Ascending aorta (tissue), 2 donors: ENCODE measurements at regions of chr2 and their contacts with region 1.

Region 1: GRCh38 chr2:111897924-111898702 is at the start of gene MERTK:
- DNase-seq: peak; percentile 63 to 93
- H3K4me3 ChIP-seq: peak within 1 kb of the TSS; percentile 90 to 91
- H3K27ac ChIP-seq: peak within 1 kb of the TSS; percentile 90 to 92
- H3K4me1 ChIP-seq: peaks cover 0 to 14% of the 10 kb centered on the region in 2 donors
- H3K27me3 ChIP-seq: no peaks in the 10 kb centered on the region
- CTCF ChIP-seq: peak; percentile 69 to 90 (median 75)
- total RNA-seq, gene MERTK: 11.1 TPM

Region 2: DNA sequence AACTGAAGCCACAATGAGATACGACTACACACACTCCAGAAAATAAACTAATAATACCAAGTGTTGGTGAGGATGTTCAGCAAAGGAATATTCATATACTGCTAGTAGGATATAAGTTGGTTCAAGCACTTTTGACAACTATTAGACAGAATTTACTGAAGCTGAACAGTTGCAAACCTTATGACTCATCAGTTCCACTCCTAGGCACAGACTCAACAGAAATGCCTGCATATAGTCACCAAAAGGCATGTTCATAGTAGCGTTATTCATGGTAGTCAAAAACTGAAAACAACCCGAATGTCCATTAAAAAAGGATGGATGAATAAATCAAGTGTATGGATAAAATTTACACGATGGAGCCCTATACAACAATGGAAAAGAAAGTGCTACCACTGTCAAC is 246.1 kb before region 1 on chr2:
- intact Hi-C with region 1: no loop called
- DNase-seq: no peak
- H3K4me3 ChIP-seq: no peak overlapping the region
- H3K27ac ChIP-seq: no peak overlapping the region
- H3K4me1 ChIP-seq: no peaks in the 10 kb centered on the region
- H3K27me3 ChIP-seq: no peaks in the 10 kb centered on the region
- CTCF ChIP-seq: no peak

Region 3: GRCh38 chr2:111946294-111947114 is 48.4 kb after region 1 on chr2:
- intact Hi-C with region 1: loop called (anchors 2 kb)
- DNase-seq: peak in 1 of 2 donors; percentile 86
- H3K4me3 ChIP-seq: peak overlapping the region in 1 of 2 donors; percentile 31
- H3K27ac ChIP-seq: peak overlapping the region; percentile 90 to 97
- H3K4me1 ChIP-seq: peaks cover 16 to 21% of the 10 kb centered on the region in 2 donors
- H3K27me3 ChIP-seq: no peaks in the 10 kb centered on the region
- CTCF ChIP-seq: no peak

Region 4: GRCh38 chr2:111972955-111973565 is 74.9 kb after region 1 on chr2:
- intact Hi-C with region 1: loop called (anchors 1 kb)
- DNase-seq: peak; percentile 23 to 80
- H3K4me3 ChIP-seq: peak overlapping the region in 1 of 2 donors; percentile 47
- H3K27ac ChIP-seq: peak overlapping the region; percentile 86 to 94
- H3K4me1 ChIP-seq: peaks cover 10 to 28% of the 10 kb centered on the region in 2 donors
- H3K27me3 ChIP-seq: no peaks in the 10 kb centered on the region
- CTCF ChIP-seq: no peak

Region 5: GRCh38 chr2:112032689-112033465 is 134.8 kb after region 1 on chr2:
- intact Hi-C with region 1: loop called (anchors 5 kb)
- DNase-seq: peak in 1 of 2 donors; percentile 72
- H3K4me3 ChIP-seq: no peak overlapping the region
- H3K27ac ChIP-seq: peak overlapping the region; percentile 43 to 62
- H3K4me1 ChIP-seq: peaks cover 2 to 18% of the 10 kb centered on the region in 2 donors
- H3K27me3 ChIP-seq: no peaks in the 10 kb centered on the region
- CTCF ChIP-seq: peak in 1 of 3 experiments; percentile 18

Region 6: GRCh38 chr2:112048887-112049286 is 150.8 kb after region 1 on chr2:
- intact Hi-C with region 1: loop called (anchors 1 kb)
- DNase-seq: no peak
- H3K4me3 ChIP-seq: no peak overlapping the region
- H3K27ac ChIP-seq: no peak overlapping the region
- H3K4me1 ChIP-seq: peaks cover 0 to 19% of the 10 kb centered on the region in 2 donors
- H3K27me3 ChIP-seq: no peaks in the 10 kb centered on the region
- CTCF ChIP-seq: peak; percentile 68 to 82 (median 75)

Region 7: DNA sequence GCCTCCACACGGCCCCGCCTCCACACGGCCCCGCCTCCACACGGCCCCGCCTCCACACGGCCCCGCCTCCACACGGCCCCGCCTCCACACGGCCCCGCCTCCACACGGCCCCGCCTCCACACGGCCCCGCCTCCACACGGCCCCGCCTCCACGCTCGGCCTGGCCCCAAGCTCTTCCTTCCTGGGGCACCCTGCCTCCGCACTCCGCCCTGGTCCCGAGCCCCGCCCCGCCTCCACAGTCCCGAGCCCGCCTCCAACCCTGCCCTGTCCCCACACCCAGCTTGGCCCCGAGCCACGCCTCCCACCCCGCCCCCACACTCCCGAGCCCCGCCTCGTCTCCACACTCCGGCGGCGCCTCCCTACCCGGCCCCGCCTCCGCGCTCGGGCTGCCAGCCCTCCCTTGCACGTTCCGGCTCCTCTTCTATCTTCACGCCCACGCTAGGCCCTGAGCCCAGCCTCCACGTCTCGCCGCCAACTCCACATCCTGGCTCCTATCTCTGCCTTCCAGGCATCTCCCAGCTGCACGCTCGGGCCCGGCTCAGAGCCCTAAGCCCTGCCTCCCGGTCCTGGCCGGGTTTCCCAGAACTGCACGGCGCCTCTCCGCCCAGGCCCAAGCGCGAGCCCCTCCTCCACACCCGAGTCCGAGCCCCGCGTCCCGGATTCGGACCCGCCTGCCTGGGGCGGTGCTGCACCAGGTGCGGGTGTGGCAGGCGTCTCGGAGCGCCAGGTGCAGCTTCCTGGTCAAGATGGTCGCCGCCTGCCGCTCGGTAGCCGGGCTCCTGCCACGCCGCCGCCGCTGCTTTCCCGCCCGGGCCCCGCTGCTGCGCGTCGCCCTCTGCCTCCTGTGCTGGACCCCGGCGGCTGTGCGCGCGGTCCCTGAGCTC is 157.0 kb after region 1 on chr2 and contains the start of gene TMEM87B:
- intact Hi-C with region 1: loop called (anchors 1 kb)
- DNase-seq: peak; percentile 88 to 98
- H3K4me3 ChIP-seq: peak within 1 kb of the TSS; percentile 78 to 98
- H3K27ac ChIP-seq: peak within 1 kb of the TSS; percentile 96 to 98
- H3K4me1 ChIP-seq: peaks cover 0 to 21% of the 10 kb centered on the region in 2 donors
- H3K27me3 ChIP-seq: no peaks in the 10 kb centered on the region
- CTCF ChIP-seq: no peak
- total RNA-seq, gene TMEM87B: 11.7 TPM

Region 8: GRCh38 chr2:112254466-112255239 is 356.5 kb after region 1 on chr2 and contains the start of gene ZC3H8:
- intact Hi-C with region 1: loop called (anchors 10 kb)
- DNase-seq: peak; percentile 59 to 96
- H3K4me3 ChIP-seq: peak within 1 kb of the TSS; percentile 65 to 76
- H3K27ac ChIP-seq: peak within 1 kb of the TSS; percentile 61 to 69
- H3K4me1 ChIP-seq: peaks cover 0 to 7% of the 10 kb centered on the region in 2 donors
- H3K27me3 ChIP-seq: no peaks in the 10 kb centered on the region
- CTCF ChIP-seq: peak in 1 of 3 experiments; percentile 9
- total RNA-seq, gene ZC3H8: 0.11 TPM

Region 9: DNA sequence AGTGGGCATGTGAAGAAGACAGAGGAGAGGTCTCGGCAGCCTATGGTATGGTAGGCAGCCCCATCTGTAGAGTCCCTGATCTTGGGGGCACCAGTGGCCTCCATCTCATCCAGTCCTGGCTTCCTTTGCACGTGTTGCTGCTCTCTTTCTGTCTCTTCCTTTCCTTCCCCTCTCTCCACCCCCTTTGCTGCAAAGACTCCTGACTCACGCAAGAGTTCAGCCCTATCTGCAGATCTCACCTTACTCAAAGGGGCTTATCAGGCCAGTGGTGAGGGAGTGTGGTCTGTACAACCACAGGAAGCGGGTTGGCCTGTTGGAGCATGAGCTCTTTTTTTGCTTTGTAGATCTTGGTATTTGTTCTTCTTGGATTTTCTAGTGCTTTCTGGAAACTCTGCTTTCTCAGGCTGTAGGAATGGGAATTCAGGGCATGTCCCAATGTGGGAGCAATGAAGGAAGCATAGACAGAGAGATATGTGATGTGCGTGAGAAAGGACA is 808.1 kb after region 1 on chr2:
- intact Hi-C with region 1: no loop called
- DNase-seq: no peak
- H3K4me3 ChIP-seq: no peak overlapping the region
- H3K27ac ChIP-seq: no peak overlapping the region
- H3K4me1 ChIP-seq: no peaks in the 10 kb centered on the region
- H3K27me3 ChIP-seq: no peaks in the 10 kb centered on the region
- CTCF ChIP-seq: no peak